ENCODE measurements at regions of chr19 and their contacts with region 1.

Region 1: GRCh38 chr19:2070436-2070827 is 19.4 kb upstream of the MKNK2 start:
- DNase-seq: no peak
- ATAC-seq: no peak
- H3K4me3 ChIP-seq: no peak overlapping the region
- H3K27ac ChIP-seq: no peak overlapping the region
- H3K4me1 ChIP-seq: no peaks in the 10 kb centered on the region
- H3K27me3 ChIP-seq: no peaks in the 10 kb centered on the region

Region 2: GRCh38 chr19:1863726-1864480 is 206.5 kb before region 1 on chr19:
- intact Hi-C with region 1: loop called in 1 of 4 experiments (anchors 10 kb)
- DNase-seq: peak; percentile 95 to 97 (median 96)
- ATAC-seq: peak; percentile 86
- H3K4me3 ChIP-seq: peak overlapping the region; percentile 95
- H3K27ac ChIP-seq: peak overlapping the region; percentile 49
- H3K4me1 ChIP-seq: peaks cover 11% of the 10 kb centered on the region
- H3K27me3 ChIP-seq: no peaks in the 10 kb centered on the region

Region 3: GRCh38 chr19:1929021-1929742 is 141.2 kb before region 1 on chr19:
- intact Hi-C with region 1: loop called in 1 of 4 experiments (anchors 5 kb)
- DNase-seq: peak; percentile 78 to 94 (median 90)
- ATAC-seq: peak; percentile 87 to 89
- H3K4me3 ChIP-seq: no peak overlapping the region
- H3K27ac ChIP-seq: no peak overlapping the region
- H3K4me1 ChIP-seq: no peaks in the 10 kb centered on the region
- H3K27me3 ChIP-seq: no peaks in the 10 kb centered on the region

Region 4: DNA sequence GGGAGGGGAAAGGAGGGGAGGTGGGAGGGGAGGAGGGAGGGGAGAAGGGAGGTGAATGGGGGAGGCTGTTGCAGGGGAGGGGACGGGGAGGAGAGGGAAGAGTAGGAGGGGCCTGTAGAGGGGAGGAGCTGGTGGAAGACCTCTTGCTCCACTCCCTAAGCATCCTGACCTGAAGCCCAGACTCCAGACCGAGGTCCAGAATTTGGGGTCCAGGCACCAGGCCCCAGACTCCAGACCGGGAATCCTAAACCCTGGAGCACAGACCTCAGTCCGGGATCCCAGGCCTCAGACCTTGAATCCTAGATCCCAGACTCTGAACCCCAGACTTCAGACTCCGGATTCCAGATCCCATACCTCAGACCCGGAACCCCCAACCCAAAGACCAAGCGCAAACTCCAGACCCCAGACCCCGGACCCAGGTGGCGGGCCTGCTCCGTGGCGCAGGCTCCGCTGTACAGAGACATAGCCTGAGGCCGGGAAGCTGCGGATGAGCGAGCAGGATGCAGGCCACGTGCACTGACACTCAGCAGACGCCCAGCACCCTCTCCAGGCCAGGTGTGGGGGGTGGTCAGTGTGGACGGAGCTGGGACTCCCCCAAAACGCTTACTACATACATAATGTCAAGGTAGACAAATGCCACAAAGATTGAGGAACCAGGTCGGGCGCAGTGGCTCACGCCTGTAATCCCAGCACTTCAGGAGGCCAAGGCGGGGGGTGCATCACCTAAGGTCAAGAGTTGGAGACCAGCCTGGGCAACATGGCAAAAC is 54.2 kb before region 1 on chr19:
- intact Hi-C with region 1: loop called (anchors 2 to 5 kb)
- DNase-seq: peak; percentile 84 to 91 (median 87)
- ATAC-seq: peak; percentile 84 to 89
- H3K4me3 ChIP-seq: peak overlapping the region; percentile 12
- H3K27ac ChIP-seq: peak overlapping the region; percentile 47
- H3K4me1 ChIP-seq: peaks cover 2% of the 10 kb centered on the region
- H3K27me3 ChIP-seq: no peaks in the 10 kb centered on the region